ENCODE measurements at regions of chr4 and their contacts with region 1.

Region 1: GRCh38 chr4:105620640-105621323 is 68.4 kb downstream of the ARHGEF38 start:
- DNase-seq: no peak
- CTCF ChIP-seq: no peak

Region 2: DNA sequence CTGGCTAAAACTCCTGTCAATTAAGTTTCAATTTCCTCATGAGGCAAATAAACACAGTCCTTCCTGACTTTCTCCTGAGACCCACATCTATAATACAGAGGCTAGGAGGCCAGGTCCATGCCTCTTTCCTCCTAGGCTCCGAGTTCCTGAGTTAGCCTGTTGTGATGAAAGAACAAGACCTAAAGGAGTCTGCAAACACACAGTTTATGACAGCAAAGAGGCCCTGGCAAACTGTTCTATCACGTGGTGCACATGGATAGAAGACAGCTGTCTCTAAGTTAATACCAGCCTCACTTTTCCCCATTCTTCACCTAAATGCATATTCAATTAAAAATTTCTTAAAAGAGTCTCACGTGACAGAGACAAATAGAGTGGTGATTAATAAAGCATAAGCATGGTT is 328.9 kb before region 1 on chr4:
- CTCF ChIA-PET with region 1: no interaction called
- POLR2A ChIA-PET with region 1: no interaction called
- DNase-seq: no peak
- CTCF ChIP-seq: no peak

Region 3: GRCh38 chr4:105594099-105594993 is 26.4 kb before region 1 on chr4:
- CTCF ChIA-PET with region 1: no interaction called
- POLR2A ChIA-PET with region 1: no interaction called
- DNase-seq: peak; percentile 27
- CTCF ChIP-seq: no peak

Region 4: GRCh38 chr4:105631818-105632400 is 11.1 kb after region 1 on chr4:
- CTCF ChIA-PET with region 1: interaction called, 10 read pairs
- POLR2A ChIA-PET with region 1: no interaction called
- DNase-seq: no peak
- CTCF ChIP-seq: no peak

Measured in GM10248 (cell line).